ENCODE measurements at regions of chr15 and their contacts with region 1.

Region 1: GRCh38 chr15:99565299-99566156 is at the start of gene MEF2A:
- DNase-seq: peak; percentile 95
- ATAC-seq: peak; percentile 84
- H3K4me3 Mint-ChIP-seq: peak within 1 kb of the TSS; percentile 98
- H3K27ac Mint-ChIP-seq: peak within 1 kb of the TSS; percentile 96
- H3K4me1 Mint-ChIP-seq: peaks cover 21% of the 10 kb centered on the region
- H3K27me3 Mint-ChIP-seq: no peaks in the 10 kb centered on the region
- total RNA-seq, gene MEF2A: 16.5 to 20.9 TPM

Region 2: DNA sequence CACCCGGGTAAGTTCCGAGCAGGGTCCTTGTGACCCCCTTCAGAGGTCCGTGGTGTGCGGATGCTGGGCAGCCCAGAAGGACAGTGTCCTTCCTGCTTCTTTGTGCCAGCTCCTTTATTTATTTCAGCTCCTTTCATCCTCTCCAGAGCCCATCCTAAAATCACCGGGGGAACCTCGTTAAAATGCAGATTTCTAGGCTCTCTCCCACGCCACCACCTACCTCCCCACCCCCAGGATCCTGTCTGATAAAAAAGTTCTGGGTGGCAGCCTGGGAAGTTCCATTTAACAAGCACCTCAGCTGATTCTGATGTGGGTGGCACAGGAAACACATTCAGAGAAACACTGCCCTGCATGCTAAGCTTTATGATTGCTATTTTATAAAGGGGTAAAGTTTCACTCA is 929.7 kb before region 1 on chr15:
- CTCF ChIA-PET with region 1: no interaction called
- POLR2A ChIA-PET with region 1: no interaction called
- intact Hi-C with region 1: no loop called
- DNase-seq: no peak
- ATAC-seq: no peak
- H3K4me3 Mint-ChIP-seq: no peak overlapping the region
- H3K27ac Mint-ChIP-seq: no peak overlapping the region
- H3K4me1 Mint-ChIP-seq: peaks cover 9% of the 10 kb centered on the region
- H3K27me3 Mint-ChIP-seq: no peaks in the 10 kb centered on the region

Region 3: DNA sequence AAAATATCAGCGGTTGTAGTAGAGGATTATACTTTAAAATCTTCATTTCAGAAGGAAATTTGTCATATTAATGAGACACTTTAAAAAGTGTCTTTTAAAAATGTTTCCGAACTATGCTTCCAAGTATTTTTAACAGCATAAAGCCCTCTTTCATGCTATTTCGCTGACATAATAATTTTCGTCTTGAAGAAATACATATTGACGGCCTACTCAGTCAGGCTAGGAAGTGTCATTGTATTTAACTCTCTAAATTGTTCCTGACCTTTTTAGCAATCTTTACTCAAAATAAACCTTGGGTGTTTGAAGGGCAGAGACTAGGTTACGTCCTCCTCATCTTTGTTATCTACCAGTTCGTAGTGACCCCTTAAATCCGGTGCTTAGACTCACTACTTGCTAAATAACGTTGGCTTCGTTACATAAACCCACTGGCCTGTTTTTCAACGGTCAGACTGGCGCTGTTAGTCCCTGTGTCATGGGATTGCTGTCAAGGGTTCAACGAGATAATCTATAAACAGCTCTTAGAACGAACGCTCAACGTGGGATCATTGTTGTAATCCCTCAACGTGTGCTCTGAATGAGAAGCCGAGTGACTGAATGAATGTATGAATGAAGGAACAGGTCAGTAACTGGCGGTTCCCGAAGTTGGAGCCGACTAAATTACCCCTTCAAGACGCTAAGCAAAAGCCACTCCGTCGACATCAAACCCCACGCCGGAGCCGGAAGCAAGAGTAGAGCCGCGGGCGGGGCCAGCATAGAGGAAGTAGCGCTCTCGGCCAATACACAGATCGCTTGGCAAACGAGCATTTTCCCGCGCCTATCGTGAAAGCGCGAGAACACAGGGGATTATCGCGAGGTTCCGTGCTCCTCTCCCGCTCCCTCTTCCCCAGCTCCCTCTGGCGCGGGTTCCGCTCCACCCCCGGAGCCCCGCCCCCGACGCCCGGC is 314.8 kb before region 1 on chr15:
- CTCF ChIA-PET with region 1: no interaction called
- POLR2A ChIA-PET with region 1: no interaction called
- intact Hi-C with region 1: loop called (anchors 1 to 5 kb)
- DNase-seq: peak; percentile 98
- ATAC-seq: peak; percentile 99
- H3K4me3 Mint-ChIP-seq: no peak overlapping the region
- H3K27ac Mint-ChIP-seq: peak overlapping the region; percentile 95
- H3K4me1 Mint-ChIP-seq: peaks cover 22% of the 10 kb centered on the region
- H3K27me3 Mint-ChIP-seq: no peaks in the 10 kb centered on the region

Region 4: GRCh38 chr15:99343881-99344551 is 221.5 kb before region 1 on chr15:
- CTCF ChIA-PET with region 1: interaction called, 4 read pairs
- POLR2A ChIA-PET with region 1: no interaction called
- intact Hi-C with region 1: loop called in 1 of 2 experiments (anchors 10 kb)
- DNase-seq: peak; percentile 71
- ATAC-seq: peak; percentile 90
- H3K4me3 Mint-ChIP-seq: no peak overlapping the region
- H3K27ac Mint-ChIP-seq: peak overlapping the region; percentile 7
- H3K4me1 Mint-ChIP-seq: peaks cover 12% of the 10 kb centered on the region
- H3K27me3 Mint-ChIP-seq: no peaks in the 10 kb centered on the region

Region 5: GRCh38 chr15:99582508-99582960 is 17.0 kb after region 1 on chr15:
- CTCF ChIA-PET with region 1: interaction called, 17 read pairs
- POLR2A ChIA-PET with region 1: no interaction called
- intact Hi-C with region 1: no loop called
- DNase-seq: no peak
- ATAC-seq: peak; percentile 30
- H3K4me3 Mint-ChIP-seq: no peak overlapping the region
- H3K27ac Mint-ChIP-seq: no peak overlapping the region
- H3K4me1 Mint-ChIP-seq: peaks cover 39% of the 10 kb centered on the region
- H3K27me3 Mint-ChIP-seq: no peaks in the 10 kb centered on the region

Region 6: GRCh38 chr15:99733268-99734039 is 167.9 kb after region 1 on chr15 and contains the start of gene LYSMD4:
- CTCF ChIA-PET with region 1: no interaction called
- POLR2A ChIA-PET with region 1: no interaction called
- intact Hi-C with region 1: loop called in 1 of 2 experiments (anchors 1 kb)
- DNase-seq: peak; percentile 100
- ATAC-seq: peak; percentile 99
- H3K4me3 Mint-ChIP-seq: peak within 1 kb of the TSS; percentile 71
- H3K27ac Mint-ChIP-seq: peak within 1 kb of the TSS; percentile 91
- H3K4me1 Mint-ChIP-seq: peaks cover 23% of the 10 kb centered on the region
- H3K27me3 Mint-ChIP-seq: no peaks in the 10 kb centered on the region
- total RNA-seq, gene LYSMD4: 4.7 to 5.3 TPM

Region 7: DNA sequence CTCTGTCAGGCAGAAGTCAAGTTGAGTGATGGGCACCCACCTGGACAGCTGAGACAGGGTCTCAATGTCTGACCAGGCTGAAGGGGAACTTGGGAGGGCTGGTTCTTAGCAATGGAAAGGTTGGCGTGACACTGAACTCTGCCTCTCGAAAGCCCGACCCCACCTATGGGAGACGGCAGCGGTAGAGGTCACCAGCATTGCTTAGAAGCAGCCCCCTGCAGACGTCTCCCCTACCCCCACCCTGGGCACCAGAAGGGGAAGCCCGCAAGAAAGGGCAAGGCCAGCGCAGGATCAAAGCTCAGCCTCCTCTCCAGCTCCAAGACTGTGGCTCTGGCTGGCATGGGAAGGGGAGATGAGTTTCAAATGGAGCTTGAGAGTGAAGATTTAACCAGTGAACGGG is 352.5 kb after region 1 on chr15:
- CTCF ChIA-PET with region 1: no interaction called
- POLR2A ChIA-PET with region 1: no interaction called
- intact Hi-C with region 1: no loop called
- DNase-seq: no peak
- ATAC-seq: no peak
- H3K4me3 Mint-ChIP-seq: no peak overlapping the region
- H3K27ac Mint-ChIP-seq: no peak overlapping the region
- H3K4me1 Mint-ChIP-seq: no peaks in the 10 kb centered on the region
- H3K27me3 Mint-ChIP-seq: peaks cover 18% of the 10 kb centered on the region

Region 8: GRCh38 chr15:100602064-100602822 is 1036.7 kb after region 1 on chr15 and contains the starts of genes ASB7 and LINS1:
- CTCF ChIA-PET with region 1: no interaction called
- POLR2A ChIA-PET with region 1: no interaction called
- intact Hi-C with region 1: loop called in 1 of 2 experiments (anchors 1 kb)
- DNase-seq: peak; percentile 100
- ATAC-seq: peak; percentile 85
- H3K4me3 Mint-ChIP-seq: no peak within 1 kb of the TSS
- H3K27ac Mint-ChIP-seq: no peak within 1 kb of the TSS
- H3K4me1 Mint-ChIP-seq: peaks cover 58% of the 10 kb centered on the region
- H3K27me3 Mint-ChIP-seq: no peaks in the 10 kb centered on the region
- total RNA-seq, gene ASB7: 16.6 to 19.5 TPM
- total RNA-seq, gene LINS1: 41.7 to 43.8 TPM

Measured in activated CD4-positive, alpha-beta T cell treated with anti-CD3 and anti-CD28 coated beads for 36 hours (primary cell).